Natural killer cell (primary cell): ENCODE measurements at regions of chr19 and their contacts with region 1.

Region 1: GRCh38 chr19:17579661-17580244 is 24.3 kb downstream of the COLGALT1 start:
- DNase-seq: peak; percentile 24 to 41
- ATAC-seq: peak; percentile 67 to 78 (median 71)
- H3K4me3 ChIP-seq: no peak overlapping the region
- H3K4me3 Mint-ChIP-seq: no peak overlapping the region
- H3K27ac ChIP-seq: no peak overlapping the region
- H3K27ac Mint-ChIP-seq: peak overlapping the region in 1 of 2 donors; percentile 63
- H3K4me1 ChIP-seq: no peaks in the 10 kb centered on the region
- H3K4me1 Mint-ChIP-seq: peaks cover 0 to 16% of the 10 kb centered on the region in 2 donors
- H3K27me3 ChIP-seq: no peaks in the 10 kb centered on the region
- H3K27me3 Mint-ChIP-seq: no peaks in the 10 kb centered on the region
- CTCF ChIP-seq: no peak

Region 2: DNA sequence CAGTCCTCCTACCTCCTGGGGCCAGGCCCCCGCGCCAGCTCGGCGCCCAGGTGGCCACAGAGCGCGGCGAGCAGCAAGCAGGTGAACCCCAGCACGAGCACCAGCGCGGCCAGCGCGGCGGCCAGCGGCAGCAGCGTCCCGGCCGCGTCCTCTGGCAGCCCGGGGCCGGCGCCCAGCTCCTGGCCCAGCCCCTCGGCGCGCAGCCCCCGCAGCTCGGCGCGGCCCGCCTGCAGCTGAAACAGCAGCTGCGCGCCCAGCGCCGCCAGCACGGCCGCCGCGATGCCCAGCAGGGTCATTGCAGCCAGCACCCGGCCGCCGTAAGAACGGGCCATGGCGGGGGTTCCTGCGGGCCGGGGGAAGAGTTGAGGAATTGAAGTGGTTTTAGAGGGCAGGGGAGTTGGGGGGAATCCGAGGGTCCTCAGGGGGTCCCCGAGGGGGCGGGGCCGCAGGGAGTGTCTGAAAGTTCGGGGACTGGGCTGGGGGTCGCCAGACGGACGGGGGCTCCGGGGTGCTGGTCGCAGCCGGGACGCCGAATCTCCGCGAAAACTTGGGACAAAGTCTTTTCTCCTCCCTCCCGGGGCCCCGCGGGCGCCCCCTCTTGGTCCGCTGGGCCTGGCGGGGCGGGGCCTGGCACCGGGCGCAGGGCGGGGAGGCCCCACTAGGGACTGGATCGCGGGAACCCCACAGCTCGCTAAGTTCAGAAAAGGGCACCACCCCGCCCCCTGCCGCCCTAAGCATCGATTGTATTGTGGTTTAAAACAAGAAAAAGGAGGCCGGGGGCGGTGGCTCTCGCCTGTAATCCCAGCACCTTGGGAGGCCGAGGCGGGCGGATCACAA is 131.4 kb before region 1 on chr19 and contains the start of gene TMEM221:
- intact Hi-C with region 1: loop called (anchors 1 kb)
- DNase-seq: peak; percentile 43 to 77
- ATAC-seq: peak; percentile 65 to 89 (median 89)
- H3K4me3 ChIP-seq: no peak within 1 kb of the TSS
- H3K4me3 Mint-ChIP-seq: no peak within 1 kb of the TSS
- H3K27ac ChIP-seq: no peak within 1 kb of the TSS
- H3K27ac Mint-ChIP-seq: no peak within 1 kb of the TSS
- H3K4me1 ChIP-seq: peaks cover 6% of the 10 kb centered on the region
- H3K4me1 Mint-ChIP-seq: no peaks in the 10 kb centered on the region
- H3K27me3 ChIP-seq: peaks cover 15% of the 10 kb centered on the region
- H3K27me3 Mint-ChIP-seq: peaks cover 8 to 20% of the 10 kb centered on the region in 2 donors
- CTCF ChIP-seq: peak; percentile 58
- total RNA-seq, gene TMEM221: not detected

Region 3: DNA sequence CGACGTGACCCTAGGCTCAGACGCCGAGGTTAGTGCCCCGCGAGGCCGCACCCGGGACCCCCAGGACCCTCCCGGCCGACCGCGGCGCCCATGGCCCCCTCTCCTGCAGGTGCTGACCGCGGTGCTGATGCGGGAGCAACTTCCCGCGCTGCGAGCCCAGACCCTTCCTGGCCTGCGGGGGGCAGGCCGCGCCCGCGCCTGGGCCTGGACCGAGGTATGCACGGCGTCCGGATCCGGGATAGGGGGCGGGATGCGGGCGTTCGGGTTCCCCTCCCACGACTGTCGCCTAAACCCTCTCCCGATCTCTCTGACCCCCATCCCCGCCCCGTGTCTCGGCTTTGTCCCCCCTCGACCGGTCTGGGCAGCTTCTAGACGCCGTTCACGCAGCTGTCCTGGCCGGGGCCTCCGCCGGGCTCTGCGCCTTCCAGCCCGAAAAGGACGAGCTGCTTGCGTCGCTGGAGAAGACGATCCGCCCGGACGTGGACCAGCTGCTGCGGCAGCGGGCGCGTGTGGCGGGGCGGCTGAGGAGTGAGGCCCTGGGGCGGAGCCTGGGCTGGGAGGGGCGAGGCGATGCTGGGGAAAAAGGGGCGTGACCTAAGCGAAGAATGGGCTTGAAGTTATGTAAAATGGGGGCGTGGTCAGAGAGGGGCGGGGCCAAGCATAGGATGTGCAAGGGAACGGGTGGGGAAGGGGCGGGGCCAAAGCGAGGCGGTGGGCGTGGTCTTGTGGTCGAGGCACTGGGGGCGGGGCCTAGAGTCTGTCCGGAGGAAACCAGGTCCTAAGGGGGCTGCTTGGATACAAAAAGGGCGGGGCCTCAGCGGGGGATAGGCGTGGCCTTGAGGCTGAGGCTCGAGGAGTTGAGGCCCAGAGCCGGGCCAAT is 40.3 kb before region 1 on chr19:
- intact Hi-C with region 1: no loop called
- DNase-seq: peak; percentile 98 to 99
- ATAC-seq: peak; percentile 95 to 100 (median 97)
- H3K4me3 ChIP-seq: peak overlapping the region; percentile 57
- H3K4me3 Mint-ChIP-seq: peak overlapping the region; percentile 89
- H3K27ac ChIP-seq: peak overlapping the region; percentile 60
- H3K27ac Mint-ChIP-seq: peak overlapping the region; percentile 67 to 86
- H3K4me1 ChIP-seq: peaks cover 22% of the 10 kb centered on the region
- H3K4me1 Mint-ChIP-seq: peaks cover 15 to 25% of the 10 kb centered on the region in 2 donors
- H3K27me3 ChIP-seq: no peaks in the 10 kb centered on the region
- H3K27me3 Mint-ChIP-seq: no peaks in the 10 kb centered on the region
- CTCF ChIP-seq: no peak

Region 4: GRCh38 chr19:17550076-17550667 is 29.6 kb before region 1 on chr19:
- intact Hi-C with region 1: no loop called
- DNase-seq: no peak
- ATAC-seq: no peak
- H3K4me3 ChIP-seq: no peak overlapping the region
- H3K4me3 Mint-ChIP-seq: no peak overlapping the region
- H3K27ac ChIP-seq: no peak overlapping the region
- H3K27ac Mint-ChIP-seq: no peak overlapping the region
- H3K4me1 ChIP-seq: peaks cover 4% of the 10 kb centered on the region
- H3K4me1 Mint-ChIP-seq: peaks cover 3 to 7% of the 10 kb centered on the region in 2 donors
- H3K27me3 ChIP-seq: no peaks in the 10 kb centered on the region
- H3K27me3 Mint-ChIP-seq: no peaks in the 10 kb centered on the region
- CTCF ChIP-seq: no peak